ENCODE measurements at regions of chr13 and their contacts with region 1.

Region 1: DNA sequence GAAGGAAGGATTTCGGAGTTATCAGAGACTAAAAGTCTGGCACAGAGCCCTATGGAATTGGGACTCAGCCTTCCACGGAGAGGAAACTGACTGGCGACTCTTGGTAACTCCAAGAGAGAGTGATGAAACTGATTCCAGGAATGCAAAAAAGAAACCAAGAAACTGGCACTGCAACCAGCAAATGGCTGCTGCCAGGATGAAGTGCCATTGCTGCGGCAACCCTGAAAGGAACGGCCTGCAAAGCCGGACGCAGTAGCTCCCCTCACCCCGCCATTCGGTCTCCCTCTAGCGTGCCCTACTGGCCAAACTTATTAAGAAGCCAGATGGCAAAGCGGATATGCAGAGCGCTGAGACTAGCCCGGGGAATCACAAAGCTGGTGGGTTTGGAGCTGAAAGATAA is 236.0 kb downstream of the PCDH9 start:
- DNase-seq: peak; percentile 81
- H3K4me3 ChIP-seq: peak overlapping the region; percentile 17 to 65 (median 53)
- H3K27ac ChIP-seq: no peak overlapping the region
- H3K4me1 ChIP-seq: peaks cover 16% of the 10 kb centered on the region
- H3K27me3 ChIP-seq: no peaks in the 10 kb centered on the region
- CTCF ChIP-seq: peak; percentile 54 to 79
- POLR2A ChIP-seq: no peak

Region 2: GRCh38 chr13:66689628-66690027 is 304.5 kb before region 1 on chr13:
- CTCF ChIA-PET with region 1: interaction called, 19 read pairs
- POLR2A ChIA-PET with region 1: no interaction called
- dilution Hi-C with region 1: no loop called
- intact Hi-C with region 1: no loop called
- DNase-seq: peak; percentile 26
- H3K4me3 ChIP-seq: no peak overlapping the region
- H3K27ac ChIP-seq: no peak overlapping the region
- H3K4me1 ChIP-seq: no peaks in the 10 kb centered on the region
- H3K27me3 ChIP-seq: no peaks in the 10 kb centered on the region
- CTCF ChIP-seq: peak in 1 of 2 donors; percentile 23
- POLR2A ChIP-seq: no peak

Region 3: GRCh38 chr13:66859934-66860877 is 133.9 kb before region 1 on chr13:
- CTCF ChIA-PET with region 1: interaction called, 3 read pairs
- POLR2A ChIA-PET with region 1: no interaction called
- dilution Hi-C with region 1: no loop called
- intact Hi-C with region 1: loop called (anchors 5 kb)
- DNase-seq: peak; percentile 23
- H3K4me3 ChIP-seq: no peak overlapping the region
- H3K27ac ChIP-seq: no peak overlapping the region
- H3K4me1 ChIP-seq: peaks cover 13% of the 10 kb centered on the region
- H3K27me3 ChIP-seq: no peaks in the 10 kb centered on the region
- CTCF ChIP-seq: no peak
- POLR2A ChIP-seq: no peak

Region 4: DNA sequence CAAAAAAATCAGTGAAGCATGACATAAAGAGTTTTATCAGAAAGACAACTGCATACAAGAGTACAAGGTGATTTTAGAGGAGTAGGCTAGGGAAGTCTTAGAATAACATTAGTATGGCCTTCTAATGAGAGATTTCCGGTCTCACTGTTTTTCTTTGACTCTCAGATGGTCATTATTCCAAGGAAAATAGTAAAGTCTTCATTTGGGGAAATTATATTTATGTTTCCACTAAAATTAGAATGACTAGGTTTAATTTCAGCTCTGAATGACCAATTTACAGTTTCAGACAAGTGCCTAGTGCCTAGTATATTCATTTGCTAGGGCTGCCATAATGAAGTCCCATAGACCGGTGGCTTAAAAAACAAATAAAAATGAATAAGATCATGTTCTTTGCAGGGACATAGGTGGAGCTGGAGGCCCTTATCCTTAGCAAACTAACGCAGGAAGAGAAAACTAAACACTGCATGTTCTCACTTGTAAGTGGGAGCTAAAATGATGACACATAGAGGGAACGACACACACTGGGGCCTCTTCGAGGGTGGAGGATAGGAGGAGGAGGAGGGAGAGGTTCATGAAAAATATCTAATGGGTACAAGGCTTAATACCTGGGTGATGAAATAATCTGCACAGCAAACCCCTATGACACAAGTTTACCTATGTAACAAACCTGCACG is 67.1 kb before region 1 on chr13:
- CTCF ChIA-PET with region 1: interaction called, 6 read pairs
- POLR2A ChIA-PET with region 1: no interaction called
- dilution Hi-C with region 1: no loop called
- intact Hi-C with region 1: loop called (anchors 5 kb)
- DNase-seq: peak; percentile 66
- H3K4me3 ChIP-seq: no peak overlapping the region
- H3K27ac ChIP-seq: no peak overlapping the region
- H3K4me1 ChIP-seq: peaks cover 13% of the 10 kb centered on the region
- H3K27me3 ChIP-seq: no peaks in the 10 kb centered on the region
- CTCF ChIP-seq: no peak
- POLR2A ChIP-seq: no peak

Region 5: GRCh38 chr13:66965181-66965580 is 28.9 kb before region 1 on chr13:
- CTCF ChIA-PET with region 1: interaction called, 16 read pairs
- POLR2A ChIA-PET with region 1: no interaction called
- dilution Hi-C with region 1: no loop called
- intact Hi-C with region 1: no loop called
- DNase-seq: peak; percentile 75
- H3K4me3 ChIP-seq: no peak overlapping the region
- H3K27ac ChIP-seq: no peak overlapping the region
- H3K4me1 ChIP-seq: peaks cover 5% of the 10 kb centered on the region
- H3K27me3 ChIP-seq: no peaks in the 10 kb centered on the region
- CTCF ChIP-seq: no peak
- POLR2A ChIP-seq: no peak

Region 6: DNA sequence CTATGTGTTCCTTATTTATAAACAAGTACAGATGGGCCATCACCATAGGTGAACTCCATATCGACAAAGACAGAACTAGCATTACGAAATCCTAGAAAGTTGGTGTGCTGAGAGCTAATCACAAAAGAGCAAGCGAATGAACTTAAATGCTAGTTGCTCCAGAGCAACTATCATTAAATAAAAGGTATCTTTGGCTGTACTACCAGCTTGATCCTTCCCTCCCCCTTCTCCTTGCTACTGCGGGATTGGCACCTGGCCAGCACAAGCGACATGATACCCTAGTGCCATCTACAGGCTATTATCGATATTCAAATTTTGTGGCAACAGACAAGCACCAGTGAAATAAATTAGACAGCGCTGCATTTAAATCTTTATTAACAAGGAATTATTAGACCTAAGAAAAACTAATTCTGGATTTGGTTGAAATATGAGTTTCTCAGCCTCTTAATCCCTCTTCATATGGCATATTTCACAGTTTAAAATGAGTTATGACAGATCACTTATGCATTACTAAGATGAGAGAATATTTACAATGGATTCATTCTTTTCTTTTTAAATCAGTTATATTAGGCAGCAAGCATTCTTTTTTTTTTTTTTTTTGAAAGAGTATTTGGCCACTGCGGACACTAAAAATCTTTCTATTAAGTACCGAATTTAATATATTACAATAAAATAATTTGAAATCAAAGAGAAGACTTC is 230.2 kb after region 1 on chr13:
- CTCF ChIA-PET with region 1: interaction called, 18 read pairs
- POLR2A ChIA-PET with region 1: no interaction called
- dilution Hi-C with region 1: no loop called
- intact Hi-C with region 1: loop called (anchors 5 kb)
- DNase-seq: peak; percentile 88
- H3K4me3 ChIP-seq: peak overlapping the region in 1 of 3 experiments; percentile 21
- H3K27ac ChIP-seq: no peak overlapping the region
- H3K4me1 ChIP-seq: peaks cover 15% of the 10 kb centered on the region
- H3K27me3 ChIP-seq: no peaks in the 10 kb centered on the region
- CTCF ChIP-seq: peak; percentile 51 to 60
- POLR2A ChIP-seq: no peak